ENCODE measurements at regions of chr7 and their contacts with region 1.

Region 1: DNA sequence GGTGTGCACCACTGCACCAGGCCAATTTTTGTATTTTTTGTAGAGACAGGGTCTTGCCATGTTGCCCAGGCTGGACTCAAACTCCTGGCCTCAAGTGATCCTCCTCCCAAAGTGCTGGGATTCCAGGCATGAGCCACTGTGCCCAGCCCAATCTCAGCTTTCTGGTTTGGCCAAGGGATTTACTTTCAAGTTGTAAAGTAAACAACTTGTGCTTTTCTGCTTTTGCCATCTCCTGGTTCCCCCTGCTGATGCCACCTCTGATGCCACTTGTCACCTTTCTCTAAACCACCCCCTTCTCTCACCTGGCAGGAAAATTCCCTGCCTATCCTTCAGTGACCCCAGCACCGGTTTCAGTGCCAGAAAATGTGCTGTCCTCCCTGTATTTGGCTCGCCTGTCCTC is 145.4 kb downstream of the CUX1 start:
- DNase-seq: no peak
- ATAC-seq: no peak

Region 2: GRCh38 chr7:101978683-101979082 is 15.8 kb after region 1 on chr7:
- intact Hi-C with region 1: loop called (anchors 1 kb)
- DNase-seq: no peak
- ATAC-seq: no peak

Measured in sciatic nerve (tissue), 2 donors.